ENCODE measurements at regions of chr3 and their contacts with region 1.

Region 1: GRCh38 chr3:177468331-177468730 is 271.0 kb upstream of the TBL1XR1 start:
- DNase-seq: no peak
- H3K4me3 ChIP-seq: no peak overlapping the region
- H3K27ac ChIP-seq: no peak overlapping the region
- H3K4me1 ChIP-seq: peaks cover 4 to 19% (median 6%) of the 10 kb centered on the region in 4 donors
- H3K27me3 ChIP-seq: no peaks in the 10 kb centered on the region
- CTCF ChIP-seq: no peak
- EP300 ChIP-seq: no peak
- POLR2A ChIP-seq: no peak

Region 2: DNA sequence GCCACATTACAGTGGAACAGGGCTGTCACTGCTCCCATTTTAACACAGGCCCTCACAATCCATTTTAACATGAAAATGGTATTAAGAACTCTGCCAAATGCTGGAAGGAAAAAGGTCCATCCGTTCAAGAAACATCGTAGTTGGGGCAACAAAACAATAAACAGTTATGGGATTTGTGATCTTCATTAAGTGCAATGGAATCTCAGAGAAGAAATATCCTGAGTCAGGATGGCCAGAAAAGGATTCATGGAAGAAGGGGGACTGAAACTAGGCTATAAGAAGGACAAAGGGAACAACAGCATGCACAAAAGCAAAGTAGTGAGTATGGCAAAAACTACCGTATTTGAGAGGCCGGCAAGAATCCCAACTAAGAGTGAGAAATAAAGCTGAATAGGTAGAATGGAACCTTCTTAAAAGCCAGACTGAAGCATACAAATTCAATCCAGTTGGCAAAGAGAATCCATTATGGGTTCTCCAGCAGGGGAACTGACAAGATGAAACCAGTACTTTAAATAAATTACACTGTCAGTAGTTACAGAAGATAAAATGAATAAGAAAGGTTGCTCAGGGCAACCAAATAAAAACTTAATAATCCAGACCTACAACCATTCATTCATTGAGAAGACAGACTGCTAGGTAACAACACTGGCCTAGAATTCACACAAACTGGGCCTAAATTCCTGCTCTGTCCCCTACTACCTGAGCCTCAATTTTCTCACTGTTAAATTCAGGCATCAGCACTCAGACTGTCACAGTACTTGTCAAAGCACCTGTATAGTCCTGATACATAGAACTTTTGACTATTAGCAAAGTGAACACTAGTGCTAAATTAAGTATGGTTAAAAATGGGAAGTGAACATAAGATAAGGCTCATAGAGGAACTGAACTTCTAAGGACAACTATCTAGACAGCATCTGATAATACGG is 277.3 kb before region 1 on chr3:
- in situ Hi-C with region 1: no loop called
- intact Hi-C with region 1: no loop called
- DNase-seq: no peak
- H3K4me3 ChIP-seq: no peak overlapping the region
- H3K27ac ChIP-seq: peak overlapping the region; percentile 49 to 52 (median 50)
- H3K4me1 ChIP-seq: peaks cover 18 to 60% (median 32%) of the 10 kb centered on the region in 4 donors
- H3K27me3 ChIP-seq: no peaks in the 10 kb centered on the region
- CTCF ChIP-seq: no peak
- EP300 ChIP-seq: no peak
- POLR2A ChIP-seq: no peak

Region 3: DNA sequence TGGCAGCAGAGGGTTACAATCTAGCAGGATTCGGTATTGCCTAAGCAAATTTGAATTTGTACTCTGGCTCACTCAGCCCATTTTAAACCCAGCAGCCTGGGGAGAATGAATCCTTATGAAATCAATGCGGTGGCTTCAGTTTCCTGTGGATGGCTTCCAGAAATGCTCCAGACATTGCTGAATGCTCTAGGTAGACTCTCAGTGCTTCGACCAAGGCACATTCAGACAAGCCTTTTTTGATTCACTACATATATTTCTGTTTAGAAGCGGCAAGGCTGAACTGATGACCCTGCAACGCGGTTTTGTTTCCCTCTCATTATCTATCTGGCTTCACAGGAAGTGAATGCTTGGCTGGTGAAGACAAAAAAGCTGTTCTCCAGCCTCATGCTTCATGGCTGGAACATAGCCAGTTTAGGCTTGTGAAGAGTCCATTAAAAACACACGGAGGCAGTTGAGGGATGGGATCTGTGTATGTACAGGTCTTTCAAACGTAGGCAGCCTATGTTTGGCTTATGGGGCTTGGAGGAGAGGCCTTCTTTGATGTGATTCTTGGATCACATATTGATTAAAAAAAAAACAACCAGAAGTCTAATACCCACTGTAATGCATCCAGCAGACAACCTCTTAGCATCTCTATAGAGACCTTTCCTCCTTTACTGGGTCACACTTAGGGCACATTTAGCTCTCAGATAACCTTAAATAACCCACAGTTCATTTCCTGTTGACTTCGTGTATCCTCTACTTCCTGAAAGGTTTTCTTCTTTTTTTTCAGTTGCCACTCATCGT is 129.2 kb after region 1 on chr3:
- in situ Hi-C with region 1: no loop called
- intact Hi-C with region 1: loop called (anchors 10 kb)
- DNase-seq: no peak
- H3K4me3 ChIP-seq: no peak overlapping the region
- H3K27ac ChIP-seq: peak overlapping the region; percentile 68 to 78 (median 75)
- H3K4me1 ChIP-seq: peaks cover 15 to 47% (median 23%) of the 10 kb centered on the region in 4 donors
- H3K27me3 ChIP-seq: no peaks in the 10 kb centered on the region
- CTCF ChIP-seq: no peak
- EP300 ChIP-seq: no peak
- POLR2A ChIP-seq: no peak

Region 4: DNA sequence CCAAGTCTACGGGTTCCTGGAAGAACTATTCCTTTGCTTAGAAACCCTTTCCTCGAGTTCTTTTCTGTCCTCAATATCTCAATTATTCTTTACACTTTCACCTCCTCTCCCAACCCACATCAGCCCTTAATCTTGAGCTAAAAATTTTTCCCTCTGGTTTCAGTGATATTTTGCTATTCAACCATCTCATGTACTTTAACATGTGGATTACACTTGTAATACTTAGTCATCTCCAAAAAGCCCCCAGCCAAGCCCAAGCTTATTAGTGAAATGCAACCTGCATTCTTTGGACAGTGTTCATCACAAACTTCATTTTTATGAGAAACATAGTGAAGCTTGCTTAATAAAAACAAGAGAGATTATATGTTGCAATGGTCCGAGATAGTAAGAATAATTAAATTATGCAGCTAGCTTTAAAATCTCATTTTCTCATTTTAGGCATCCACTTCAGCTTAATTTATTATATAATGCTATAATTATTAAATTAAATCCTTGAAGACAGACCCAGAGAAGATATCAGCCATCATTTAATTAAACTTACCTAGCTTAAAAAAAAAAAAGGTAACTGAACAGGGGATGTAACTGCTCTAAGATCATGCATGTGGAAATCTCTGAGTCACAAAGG is 263.4 kb after region 1 on chr3:
- in situ Hi-C with region 1: no loop called
- intact Hi-C with region 1: no loop called
- DNase-seq: no peak
- H3K4me3 ChIP-seq: no peak overlapping the region
- H3K27ac ChIP-seq: no peak overlapping the region
- H3K4me1 ChIP-seq: no peaks in the 10 kb centered on the region
- H3K27me3 ChIP-seq: no peaks in the 10 kb centered on the region
- CTCF ChIP-seq: no peak
- EP300 ChIP-seq: no peak
- POLR2A ChIP-seq: no peak

Region 5: DNA sequence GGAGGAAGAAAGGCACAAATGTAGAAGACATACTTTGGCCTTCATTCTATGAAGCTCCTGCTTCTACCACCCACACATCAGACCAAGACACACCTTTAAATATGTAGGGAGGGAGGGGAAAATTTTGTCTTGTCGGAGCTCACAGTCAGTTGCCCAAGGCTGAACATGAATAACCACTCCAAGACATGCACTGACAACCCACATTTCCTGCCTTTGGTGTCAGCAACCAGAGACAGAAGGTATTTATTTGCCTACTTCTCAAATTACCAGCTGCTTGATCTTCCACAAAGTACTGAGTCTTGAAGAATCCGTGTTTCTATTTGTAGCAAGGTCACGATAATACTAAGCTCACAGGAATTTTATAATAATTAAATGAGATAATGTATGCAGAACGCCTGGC is 1237.6 kb after region 1 on chr3:
- in situ Hi-C with region 1: no loop called
- intact Hi-C with region 1: no loop called
- DNase-seq: no peak
- H3K4me3 ChIP-seq: no peak overlapping the region
- H3K27ac ChIP-seq: no peak overlapping the region
- H3K4me1 ChIP-seq: peaks cover 0 to 4% (median 0%) of the 10 kb centered on the region in 4 donors
- H3K27me3 ChIP-seq: no peaks in the 10 kb centered on the region
- CTCF ChIP-seq: no peak
- EP300 ChIP-seq: no peak
- POLR2A ChIP-seq: no peak